ENCODE measurements at regions of chr11 and their contacts with region 1.

Region 1: DNA sequence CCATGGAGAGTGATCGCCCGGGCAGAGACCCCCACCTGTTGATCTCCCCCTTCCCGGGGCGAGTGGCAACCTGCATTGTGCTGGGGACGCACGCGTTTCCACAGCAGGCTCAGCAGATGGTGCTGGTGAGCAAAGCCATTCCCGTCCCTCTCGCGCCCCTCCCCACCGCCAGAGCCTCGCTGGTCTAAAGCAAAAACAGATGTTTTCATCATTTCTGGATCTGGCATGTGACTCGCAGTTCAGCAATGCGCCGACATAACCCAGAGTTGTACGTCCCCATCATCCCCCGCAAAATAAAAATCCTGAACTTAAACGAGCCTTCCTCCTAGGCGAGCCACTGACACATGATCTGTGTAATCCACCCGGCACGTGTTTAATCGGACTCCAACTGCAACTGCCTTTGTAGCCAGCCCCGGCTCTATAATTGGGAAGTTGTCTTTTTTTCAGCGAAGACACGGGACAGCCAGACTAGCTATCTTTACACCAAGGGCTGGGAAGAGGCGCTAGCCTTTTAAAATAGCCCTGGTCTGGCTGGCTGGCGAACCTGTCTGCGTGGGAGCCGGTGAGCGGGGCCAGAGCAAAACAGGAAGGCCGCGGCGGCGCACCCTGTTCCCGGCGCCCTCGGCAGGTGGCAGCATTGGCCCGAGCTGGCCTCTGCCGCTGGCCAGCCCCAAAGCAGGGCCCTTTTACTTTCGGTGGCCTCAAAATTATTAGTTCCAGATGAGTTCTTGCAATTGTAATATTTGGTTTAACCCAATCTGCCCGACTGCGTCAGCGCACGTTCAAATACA is 203.0 kb upstream of the SORL1-AS1 start:
- DNase-seq: peak; percentile 39 to 81 (median 58)
- ATAC-seq: peak; percentile 88
- H3K4me3 ChIP-seq: peak overlapping the region; percentile 52
- H3K4me3 Mint-ChIP-seq: peak overlapping the region; percentile 78
- H3K27ac ChIP-seq: no peak overlapping the region
- H3K27ac Mint-ChIP-seq: peak overlapping the region; percentile 25
- H3K4me1 ChIP-seq: peaks cover 29% of the 10 kb centered on the region
- H3K4me1 Mint-ChIP-seq: peaks cover 27% of the 10 kb centered on the region
- H3K27me3 ChIP-seq: no peaks in the 10 kb centered on the region
- H3K27me3 Mint-ChIP-seq: no peaks in the 10 kb centered on the region
- CTCF ChIP-seq: peak; percentile 77

Region 2: DNA sequence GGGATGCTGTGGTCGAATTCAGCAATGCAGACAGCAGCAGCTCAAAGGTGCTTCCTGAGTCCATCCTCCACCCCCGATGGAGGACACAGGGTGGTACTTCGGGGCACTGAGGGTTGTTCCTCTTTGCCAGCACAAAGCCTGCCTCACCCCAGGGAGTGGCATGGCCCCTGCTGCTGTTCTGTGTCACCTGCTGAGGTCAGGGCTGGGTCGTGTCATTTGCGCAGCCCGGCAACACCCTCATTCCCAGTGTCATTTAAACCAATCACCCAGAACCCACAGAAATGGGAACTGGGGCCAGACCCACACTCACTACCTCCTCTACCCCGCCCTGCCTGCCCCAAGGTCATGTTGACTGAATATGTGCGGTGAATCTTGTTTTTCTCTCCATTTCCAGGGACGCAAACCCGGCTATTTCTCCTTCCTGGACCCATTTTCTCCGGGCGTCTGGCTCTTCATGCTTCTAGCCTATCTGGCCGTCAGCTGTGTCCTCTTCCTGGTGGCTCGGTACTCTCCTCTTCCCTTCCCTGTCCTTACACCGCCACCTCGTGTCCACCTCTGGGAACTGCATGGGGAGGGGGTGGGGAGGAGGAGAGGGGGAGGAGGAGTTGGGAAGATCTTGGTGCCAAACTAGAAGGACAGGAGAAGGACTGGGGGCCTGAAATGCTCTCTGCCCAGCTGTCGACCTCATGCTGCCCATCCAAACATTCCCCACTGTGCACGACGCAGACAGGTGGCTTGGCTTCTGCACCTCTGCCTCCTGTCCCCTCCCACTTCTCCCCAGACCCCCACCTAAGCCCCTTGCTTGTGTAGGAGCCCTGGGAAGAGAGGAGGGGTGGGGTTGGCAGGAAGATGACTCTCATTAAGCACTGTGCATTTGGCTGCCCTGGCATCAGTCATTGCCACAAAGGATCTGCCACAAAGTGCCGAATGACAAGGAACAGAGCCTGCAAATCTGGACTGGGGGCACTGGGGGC is 703.0 kb before region 1 on chr11:
- CTCF ChIA-PET with region 1: no interaction called
- POLR2A ChIA-PET with region 1: no interaction called
- intact Hi-C with region 1: no loop called
- DNase-seq: peak; percentile 14 to 72 (median 51)
- ATAC-seq: peak; percentile 79
- H3K4me3 ChIP-seq: peak overlapping the region; percentile 32
- H3K4me3 Mint-ChIP-seq: peak overlapping the region; percentile 56
- H3K27ac ChIP-seq: no peak overlapping the region
- H3K27ac Mint-ChIP-seq: no peak overlapping the region
- H3K4me1 ChIP-seq: peaks cover 20% of the 10 kb centered on the region
- H3K4me1 Mint-ChIP-seq: peaks cover 17% of the 10 kb centered on the region
- H3K27me3 ChIP-seq: peaks cover 6 to 15% of the 10 kb centered on the region in 2 experiments
- H3K27me3 Mint-ChIP-seq: peaks cover 51% of the 10 kb centered on the region
- CTCF ChIP-seq: peak; percentile 43

Region 3: GRCh38 chr11:121575250-121575962 is 80.3 kb before region 1 on chr11:
- CTCF ChIA-PET with region 1: no interaction called
- POLR2A ChIA-PET with region 1: no interaction called
- intact Hi-C with region 1: no loop called
- DNase-seq: peak in 2 of 14 experiments; percentile 67 to 78
- ATAC-seq: no peak
- H3K4me3 ChIP-seq: no peak overlapping the region
- H3K4me3 Mint-ChIP-seq: no peak overlapping the region
- H3K27ac ChIP-seq: no peak overlapping the region
- H3K27ac Mint-ChIP-seq: peak overlapping the region; percentile 56
- H3K4me1 ChIP-seq: no peaks in the 10 kb centered on the region
- H3K4me1 Mint-ChIP-seq: no peaks in the 10 kb centered on the region
- H3K27me3 ChIP-seq: no peaks in the 10 kb centered on the region
- H3K27me3 Mint-ChIP-seq: no peaks in the 10 kb centered on the region
- CTCF ChIP-seq: no peak

Region 4: DNA sequence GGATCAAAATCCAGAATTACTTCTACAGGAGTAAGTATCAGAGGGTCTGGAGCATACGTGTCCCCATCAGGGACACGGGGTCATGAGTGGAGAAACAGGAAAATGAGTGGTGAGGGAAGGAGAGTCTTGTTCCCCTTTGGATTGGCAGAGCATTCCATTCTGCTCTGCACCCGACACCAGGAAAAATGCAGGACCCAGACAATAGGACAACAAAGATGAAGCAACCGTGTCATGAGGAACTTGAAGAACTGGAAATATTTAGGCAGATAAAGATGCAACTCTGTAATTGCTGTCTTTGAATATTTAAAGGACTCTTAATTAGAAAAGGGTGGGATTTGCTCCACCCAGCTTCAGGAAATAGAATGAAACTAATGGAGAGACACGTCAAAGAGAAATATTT is 549.3 kb after region 1 on chr11:
- CTCF ChIA-PET with region 1: no interaction called
- POLR2A ChIA-PET with region 1: no interaction called
- intact Hi-C with region 1: loop called in 1 of 2 experiments (anchors 2 kb)
- DNase-seq: no peak
- ATAC-seq: no peak
- H3K4me3 ChIP-seq: no peak overlapping the region
- H3K4me3 Mint-ChIP-seq: no peak overlapping the region
- H3K27ac ChIP-seq: no peak overlapping the region
- H3K27ac Mint-ChIP-seq: no peak overlapping the region
- H3K4me1 ChIP-seq: no peaks in the 10 kb centered on the region
- H3K4me1 Mint-ChIP-seq: no peaks in the 10 kb centered on the region
- H3K27me3 ChIP-seq: peaks cover 13 to 14% of the 10 kb centered on the region in 2 experiments
- H3K27me3 Mint-ChIP-seq: peaks cover 67% of the 10 kb centered on the region
- CTCF ChIP-seq: no peak

Region 5: DNA sequence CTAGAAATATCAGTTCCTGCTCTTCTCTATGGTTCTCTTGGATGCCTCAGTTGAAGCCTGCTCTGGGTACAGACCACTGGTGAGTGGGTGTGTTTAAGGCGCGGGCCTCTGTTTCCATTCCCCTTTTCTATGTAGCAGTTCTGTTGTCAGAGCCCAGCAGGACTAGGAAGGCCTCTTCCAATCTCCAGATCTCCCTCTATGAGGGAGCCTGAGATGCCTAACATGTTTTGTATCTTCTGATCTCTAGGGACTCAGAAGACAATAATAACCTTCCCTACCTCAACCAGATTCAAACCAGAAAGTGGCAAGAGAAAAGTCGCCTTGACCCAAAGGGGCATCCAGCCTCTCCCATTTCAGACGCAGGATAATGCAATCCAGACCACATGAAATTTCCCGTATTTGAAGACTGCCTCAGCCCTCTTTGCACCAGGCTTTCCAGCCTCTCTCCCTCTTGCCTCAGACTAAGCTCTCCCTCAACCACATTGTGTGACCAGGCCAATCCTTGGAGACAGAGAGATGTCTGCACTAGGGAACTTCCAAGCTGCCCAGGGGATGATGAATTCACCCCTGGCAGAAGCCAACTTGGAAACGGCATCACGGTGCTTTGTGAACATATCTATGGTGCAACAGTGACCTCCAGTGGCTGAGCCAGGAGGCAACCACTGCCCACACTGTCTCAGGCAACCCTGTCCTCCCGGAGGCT is 849.7 kb after region 1 on chr11:
- CTCF ChIA-PET with region 1: no interaction called
- POLR2A ChIA-PET with region 1: no interaction called
- intact Hi-C with region 1: loop called in 1 of 2 experiments (anchors 2 kb)
- DNase-seq: peak; percentile 2 to 60 (median 16)
- ATAC-seq: peak; percentile 43
- H3K4me3 ChIP-seq: no peak overlapping the region
- H3K4me3 Mint-ChIP-seq: no peak overlapping the region
- H3K27ac ChIP-seq: no peak overlapping the region
- H3K27ac Mint-ChIP-seq: no peak overlapping the region
- H3K4me1 ChIP-seq: no peaks in the 10 kb centered on the region
- H3K4me1 Mint-ChIP-seq: no peaks in the 10 kb centered on the region
- H3K27me3 ChIP-seq: peaks cover 13 to 27% of the 10 kb centered on the region in 2 experiments
- H3K27me3 Mint-ChIP-seq: peaks cover 65% of the 10 kb centered on the region
- CTCF ChIP-seq: peak; percentile 38